GM10248 (cell line): ENCODE measurements at regions of chr3 and their contacts with region 1.

Region 1: GRCh38 chr3:136390574-136390973 is 140.4 kb downstream of the PCCB start:
- DNase-seq: no peak
- CTCF ChIP-seq: no peak

Region 2: DNA sequence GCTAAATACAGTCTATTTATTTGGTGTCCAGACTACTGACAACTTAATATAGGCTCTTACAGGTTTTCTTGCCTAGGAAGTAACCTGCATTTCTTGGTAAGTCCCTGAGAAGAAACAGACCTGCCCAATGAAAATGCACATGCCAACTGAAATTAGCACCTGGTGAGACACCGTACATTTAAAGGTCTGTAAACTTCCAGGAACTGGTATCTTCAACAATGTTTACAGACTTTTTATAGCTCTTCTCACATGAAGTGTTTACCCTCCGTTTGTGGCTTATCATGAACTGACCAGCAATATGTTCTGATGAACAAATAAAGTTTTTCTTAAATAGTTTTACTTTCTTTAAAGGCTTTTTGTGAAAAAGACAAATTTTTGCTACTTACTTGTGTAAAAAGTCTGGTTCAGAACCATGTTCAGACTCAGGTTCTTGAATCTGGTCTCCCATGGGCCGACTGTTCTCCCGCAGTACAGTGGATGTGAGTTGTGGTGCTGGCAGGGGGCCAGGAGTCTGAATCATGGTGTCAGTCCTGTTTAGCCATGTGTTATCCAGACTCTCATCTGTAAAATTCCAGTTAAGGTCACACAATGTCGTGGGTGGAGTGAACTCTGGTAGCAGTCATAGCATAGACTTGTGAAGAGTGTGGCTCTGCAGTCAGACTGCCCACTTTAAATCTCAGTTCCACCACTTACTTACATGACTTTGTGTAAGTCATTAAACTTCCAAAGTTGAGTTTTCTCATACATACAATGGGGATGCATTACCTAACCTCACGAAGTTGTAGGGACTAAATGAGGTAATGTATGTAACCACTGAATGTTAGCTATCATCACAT is 46.9 kb before region 1 on chr3:
- CTCF ChIA-PET with region 1: interaction called, 12 read pairs
- POLR2A ChIA-PET with region 1: no interaction called
- DNase-seq: no peak
- CTCF ChIP-seq: no peak

Region 3: GRCh38 chr3:136380530-136380929 is 10.0 kb before region 1 on chr3:
- CTCF ChIA-PET with region 1: interaction called, 29 read pairs
- POLR2A ChIA-PET with region 1: no interaction called
- DNase-seq: no peak
- CTCF ChIP-seq: no peak

Region 4: GRCh38 chr3:136404056-136404455 is 13.5 kb after region 1 on chr3:
- CTCF ChIA-PET with region 1: interaction called, 14 read pairs
- POLR2A ChIA-PET with region 1: no interaction called
- DNase-seq: no peak
- CTCF ChIP-seq: no peak

Region 5: GRCh38 chr3:136728918-136729317 is 338.3 kb after region 1 on chr3:
- CTCF ChIA-PET with region 1: interaction called, 10 read pairs
- POLR2A ChIA-PET with region 1: no interaction called
- DNase-seq: no peak
- CTCF ChIP-seq: no peak